Activated CD4-positive, alpha-beta T cell treated with anti-CD3 and anti-CD28 coated beads, Interleukin-2, amount 10 ng/mL, durations not matched to agents 24 days and 14 days (primary cell): ENCODE measurements at regions of chr13 and their contacts with region 1.

Region 1: DNA sequence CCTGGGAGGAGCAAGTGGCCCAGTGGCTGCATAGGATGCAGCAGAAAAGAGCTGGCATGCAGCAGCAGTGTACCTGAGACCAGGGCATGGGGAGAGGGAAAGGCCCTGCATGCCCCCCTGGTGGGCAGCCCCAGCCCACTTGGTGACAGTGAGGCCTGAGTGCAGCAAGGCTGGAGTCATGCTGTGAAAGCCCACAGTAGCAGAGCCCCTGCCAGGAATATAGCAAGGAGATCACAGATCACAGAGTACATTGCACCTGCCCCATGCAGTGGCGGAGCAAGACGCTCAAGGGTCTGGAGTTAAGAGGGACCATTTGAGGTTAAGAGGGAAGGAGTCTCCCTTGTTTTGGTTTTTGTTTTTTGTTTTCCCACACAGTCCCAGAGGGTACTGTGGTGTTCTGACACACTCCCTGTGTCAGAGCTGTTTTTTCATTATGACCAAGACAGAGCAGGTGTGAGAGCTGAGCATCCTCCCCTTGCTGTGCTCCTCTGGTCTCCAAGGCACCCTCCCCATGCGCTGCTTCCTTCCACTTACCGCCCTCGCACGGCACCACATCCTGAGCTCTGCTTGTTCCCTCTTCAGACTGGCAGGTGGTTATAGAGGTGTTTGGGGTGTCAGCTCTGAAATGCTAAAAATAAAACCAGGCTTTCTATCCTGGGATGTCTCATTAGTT is 85.0 kb upstream of the UBL3 start:
- DNase-seq: peak; percentile 94
- H3K4me3 Mint-ChIP-seq: peak overlapping the region; percentile 87
- H3K27ac Mint-ChIP-seq: peak overlapping the region; percentile 94
- H3K4me1 Mint-ChIP-seq: peaks cover 47% of the 10 kb centered on the region
- H3K27me3 Mint-ChIP-seq: no peaks in the 10 kb centered on the region

Region 2: DNA sequence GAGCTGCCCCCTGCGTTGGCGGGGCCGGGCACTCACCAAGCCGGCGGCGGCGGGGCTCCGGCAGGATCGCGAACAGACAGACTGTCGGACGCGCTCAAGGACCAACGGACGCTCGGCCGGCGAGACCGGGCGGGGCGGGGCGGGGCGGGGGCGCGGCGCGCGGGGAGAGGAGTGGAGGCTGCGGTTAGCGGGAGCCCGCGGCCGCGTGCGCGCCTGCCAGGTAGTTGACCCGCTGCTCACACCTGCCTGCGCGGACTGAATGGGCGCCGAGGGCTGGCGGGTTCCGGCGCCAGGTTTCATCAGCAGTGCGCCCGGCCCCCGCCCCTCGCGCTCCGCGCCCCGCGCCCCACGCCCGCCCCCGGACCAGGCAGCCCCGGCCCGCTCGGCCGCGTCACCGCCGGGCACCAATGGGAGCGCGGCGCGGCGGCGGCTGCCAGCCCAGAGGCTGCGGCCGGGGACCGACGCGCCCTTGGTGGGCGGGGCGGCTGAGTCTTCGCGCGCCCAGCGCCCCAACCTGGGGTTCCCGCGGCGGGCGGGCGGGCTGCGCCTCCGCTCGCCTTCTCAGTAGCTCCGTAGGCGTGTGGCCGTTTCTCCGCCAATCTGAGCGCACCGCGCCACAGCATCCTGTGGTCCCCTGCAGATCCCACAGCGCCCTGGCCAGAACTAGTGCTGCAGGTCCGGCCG is 339.9 kb before region 1 on chr13 and contains the start of gene SLC7A1:
- intact Hi-C with region 1: loop called (anchors 10 kb)
- DNase-seq: peak; percentile 97
- H3K4me3 Mint-ChIP-seq: peak within 1 kb of the TSS; percentile 95
- H3K27ac Mint-ChIP-seq: peak within 1 kb of the TSS; percentile 97
- H3K4me1 Mint-ChIP-seq: peaks cover 38% of the 10 kb centered on the region
- H3K27me3 Mint-ChIP-seq: peaks cover 5% of the 10 kb centered on the region
- total RNA-seq, gene SLC7A1: 137 and 138 TPM in 2 replicates

Region 3: DNA sequence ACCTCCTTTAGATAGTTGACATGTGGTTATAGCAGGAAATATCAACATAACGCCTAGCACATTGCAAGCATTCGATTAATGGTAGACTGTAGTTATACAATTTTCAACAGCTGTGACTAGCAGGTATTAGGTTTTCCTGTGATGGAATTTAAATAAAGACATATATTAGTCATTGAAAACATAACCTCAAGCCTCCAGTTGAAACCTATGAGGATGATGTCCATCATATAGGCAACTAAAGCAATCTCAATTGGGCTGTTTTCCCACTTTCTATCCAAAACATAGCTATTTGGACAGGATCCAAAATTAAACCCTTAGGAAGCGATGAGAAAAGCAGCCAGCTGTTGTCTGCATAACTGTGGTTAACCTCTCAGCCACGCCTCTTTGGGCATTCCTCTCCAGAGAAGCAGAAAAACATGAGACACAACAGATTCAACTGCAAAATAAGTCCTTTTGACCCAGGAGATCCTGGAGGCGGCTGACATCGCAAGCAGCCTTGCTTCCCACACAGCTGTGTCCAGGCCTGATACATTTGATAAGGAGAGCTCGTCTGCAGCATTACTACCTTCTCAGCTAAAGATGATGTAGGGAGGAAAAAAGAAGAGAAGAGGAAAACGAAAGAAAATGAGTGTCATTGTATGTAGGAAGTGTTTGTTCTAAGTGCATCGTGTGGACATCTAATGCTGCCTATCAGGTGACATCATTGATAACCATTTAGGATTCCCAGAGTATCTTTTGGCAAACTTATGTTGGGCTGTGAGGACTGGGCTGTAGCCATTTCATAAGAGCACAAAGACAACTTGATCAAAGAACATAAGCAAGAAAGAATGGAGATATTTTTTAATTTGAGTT is 33.1 kb before region 1 on chr13:
- intact Hi-C with region 1: loop called (anchors 2 kb)
- DNase-seq: peak; percentile 83
- H3K4me3 Mint-ChIP-seq: peak overlapping the region; percentile 74
- H3K27ac Mint-ChIP-seq: peak overlapping the region; percentile 84
- H3K4me1 Mint-ChIP-seq: peaks cover 21% of the 10 kb centered on the region
- H3K27me3 Mint-ChIP-seq: peaks cover 18% of the 10 kb centered on the region

Region 4: GRCh38 chr13:30002577-30002976 is 67.1 kb after region 1 on chr13:
- intact Hi-C with region 1: loop called (anchors 5 kb)
- DNase-seq: no peak
- H3K4me3 Mint-ChIP-seq: no peak overlapping the region
- H3K27ac Mint-ChIP-seq: no peak overlapping the region
- H3K4me1 Mint-ChIP-seq: peaks cover 29% of the 10 kb centered on the region
- H3K27me3 Mint-ChIP-seq: no peaks in the 10 kb centered on the region

Region 5: DNA sequence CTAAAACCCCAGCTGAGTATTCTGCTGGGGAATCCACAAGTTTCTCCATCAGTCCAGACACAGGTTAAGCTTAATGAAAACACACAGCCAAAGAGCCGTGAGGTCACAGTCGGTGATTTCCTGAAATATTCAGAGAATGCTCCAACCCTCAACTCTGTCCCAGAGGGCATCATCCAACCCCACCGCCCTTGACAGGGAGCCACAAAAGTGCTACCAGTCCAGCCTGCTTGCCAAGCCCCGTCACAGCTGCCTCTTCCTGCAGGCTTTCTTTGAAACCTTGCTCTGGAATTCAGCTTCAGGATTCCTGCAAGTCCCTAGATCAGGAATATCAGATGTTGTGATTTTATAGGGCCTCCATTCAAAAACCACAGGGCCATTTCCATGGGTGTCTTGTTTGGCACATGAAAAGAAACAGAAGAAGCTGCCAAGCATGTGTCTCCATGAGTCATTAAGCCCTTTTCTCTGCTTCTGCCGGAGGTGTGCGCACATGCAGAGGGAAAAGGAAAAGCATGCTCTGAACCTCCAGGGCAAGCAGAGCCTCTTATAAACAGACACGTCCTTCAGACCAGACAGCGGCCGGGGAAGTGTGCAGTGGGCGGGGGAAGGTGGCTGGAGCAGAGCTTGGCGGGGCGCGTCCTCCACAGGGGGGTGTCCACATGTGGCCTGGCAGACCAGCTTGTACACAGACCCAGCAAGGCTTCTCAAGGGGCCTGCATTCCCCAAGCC is 207.2 kb after region 1 on chr13:
- intact Hi-C with region 1: no loop called
- DNase-seq: peak; percentile 78
- H3K4me3 Mint-ChIP-seq: peak overlapping the region; percentile 37
- H3K27ac Mint-ChIP-seq: peak overlapping the region; percentile 93
- H3K4me1 Mint-ChIP-seq: peaks cover 54% of the 10 kb centered on the region
- H3K27me3 Mint-ChIP-seq: peaks cover 2% of the 10 kb centered on the region

Region 6: DNA sequence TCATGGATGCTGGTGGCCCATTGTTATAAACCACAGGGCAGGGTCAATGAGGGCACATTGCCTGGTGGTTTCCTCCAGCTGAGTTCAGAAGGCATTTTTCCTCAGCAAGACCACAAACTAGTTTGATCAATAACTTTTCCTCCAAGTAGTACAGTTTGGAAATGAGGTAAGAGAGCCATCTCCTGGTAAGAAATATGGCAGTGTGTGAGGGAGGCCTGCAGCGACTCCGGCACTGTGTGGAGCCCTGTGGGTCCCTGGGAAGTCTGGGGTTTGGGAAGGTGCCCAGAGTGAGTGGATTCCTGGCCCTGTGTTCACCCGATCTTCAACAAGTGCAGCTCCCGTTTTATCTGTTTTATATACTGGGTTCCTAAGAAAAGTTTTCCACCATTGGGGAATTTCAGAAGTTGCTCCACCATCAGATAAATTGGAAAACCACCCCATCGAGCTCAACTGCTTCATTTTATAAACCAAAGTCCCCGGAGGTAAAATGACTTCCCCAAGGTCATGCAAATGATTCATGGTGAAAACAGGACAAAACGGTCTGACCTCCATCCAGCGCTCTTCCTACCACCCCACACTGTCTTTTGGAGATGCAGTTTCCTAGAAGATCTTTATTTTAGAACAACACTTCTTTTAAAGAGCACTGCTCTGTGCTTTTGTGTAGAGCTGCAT is 223.5 kb after region 1 on chr13:
- intact Hi-C with region 1: loop called (anchors 1 kb)
- DNase-seq: peak; percentile 75
- H3K4me3 Mint-ChIP-seq: peak overlapping the region; percentile 77
- H3K27ac Mint-ChIP-seq: peak overlapping the region; percentile 91
- H3K4me1 Mint-ChIP-seq: peaks cover 42% of the 10 kb centered on the region
- H3K27me3 Mint-ChIP-seq: peaks cover 2% of the 10 kb centered on the region